Left cardiac atrium (tissue), 4 donors: ENCODE measurements at regions of chr11 and their contacts with region 1.

Region 1: DNA sequence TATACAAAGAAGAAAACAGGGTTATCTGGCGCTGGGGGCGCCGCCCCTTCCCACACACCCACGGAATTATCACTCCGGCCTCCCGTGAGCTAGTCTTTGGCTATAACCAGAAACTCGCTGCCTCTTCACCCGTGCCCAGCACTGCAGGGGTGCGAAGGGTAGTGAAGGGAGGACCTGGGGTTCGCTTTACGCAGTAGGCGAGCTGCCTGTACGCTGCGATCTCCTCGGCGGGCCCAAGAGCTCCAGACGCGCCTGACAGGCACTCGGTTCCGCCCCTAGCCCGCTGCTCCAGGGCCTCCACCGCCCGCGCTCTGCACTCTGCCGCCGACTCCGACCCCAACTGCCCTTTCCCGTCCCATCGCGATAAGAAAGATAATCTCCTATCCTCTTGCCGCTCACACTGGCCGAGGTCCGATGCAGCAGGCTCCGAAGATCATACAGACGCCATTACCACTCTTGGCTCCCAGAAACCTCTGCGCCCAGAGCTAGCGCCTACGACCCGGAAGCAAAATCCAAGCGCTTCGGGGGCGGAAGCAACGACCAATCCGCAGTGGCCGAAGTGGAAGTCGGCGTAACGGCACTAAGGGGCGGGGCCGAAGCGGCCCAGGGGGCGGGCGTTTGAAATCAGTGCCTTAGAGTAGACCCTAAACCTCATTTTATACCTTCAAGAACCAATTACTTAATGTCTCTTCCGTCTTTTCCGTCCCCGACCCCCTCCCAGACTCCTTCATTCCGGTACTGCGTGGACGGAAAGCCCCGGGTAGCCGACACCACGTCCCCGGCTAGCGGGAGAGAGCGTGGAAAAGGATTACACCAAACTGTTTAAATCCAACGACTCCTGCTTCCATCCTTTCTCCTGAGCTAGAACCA is at the starts of genes CWC15 and KDM4D:
- DNase-seq: peak; percentile 96
- ATAC-seq: peak; percentile 100
- total RNA-seq, gene CWC15: 60.8 to 65.5 TPM
- total RNA-seq, gene KDM4D: 0.80 to 0.89 TPM

Region 2: DNA sequence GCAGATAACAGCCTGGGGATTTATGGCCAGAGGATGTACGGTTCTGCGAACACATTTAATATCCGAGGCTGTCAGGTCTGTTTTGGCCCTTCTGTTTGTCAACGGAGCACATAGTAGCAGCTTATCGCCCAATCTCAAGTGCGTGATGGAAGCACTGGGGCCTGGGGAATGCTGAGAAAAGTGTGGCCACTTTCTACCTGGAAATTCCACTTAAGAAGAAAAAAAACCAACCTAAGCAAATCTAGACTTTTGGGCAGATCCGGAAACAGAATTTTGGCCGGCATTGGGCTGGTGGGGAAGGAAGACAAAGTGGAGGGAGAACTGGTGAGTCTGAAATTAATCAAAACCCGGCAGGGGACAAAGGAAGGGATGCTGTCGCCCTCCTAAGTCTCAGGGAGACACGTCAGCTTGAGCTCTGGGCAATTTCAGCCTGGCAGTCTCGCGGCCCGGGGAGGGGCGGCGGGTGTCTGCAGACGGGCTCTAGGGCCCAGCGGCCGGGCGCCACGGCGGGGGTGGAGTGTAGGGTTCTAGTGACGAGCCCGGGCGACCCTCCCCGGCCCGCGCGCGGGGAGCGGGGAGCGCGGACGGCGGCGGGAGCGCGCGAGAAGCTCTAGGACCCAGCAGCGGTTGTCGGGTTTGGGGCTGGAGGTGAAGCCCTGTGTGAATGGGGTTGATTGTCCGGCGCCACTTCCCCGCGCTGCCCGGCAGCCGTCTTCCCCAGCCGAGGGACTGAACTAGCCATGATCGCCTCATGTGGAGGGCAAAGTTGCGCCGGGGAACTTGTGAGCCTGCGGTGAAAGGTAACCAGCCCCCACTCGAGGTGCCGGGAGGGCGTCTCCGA is 205.4 kb before region 1 on chr11 and contains the start of gene AMOTL1:
- intact Hi-C with region 1: loop called in 1 of 2 experiments (anchors 10 kb)
- DNase-seq: peak; percentile 95
- ATAC-seq: peak; percentile 91 to 95
- total RNA-seq, gene AMOTL1: 60.6 to 106 TPM

Region 3: GRCh38 chr11:94897330-94897768 is 76.0 kb before region 1 on chr11:
- intact Hi-C with region 1: loop called in 1 of 2 experiments (anchors 10 kb)
- DNase-seq: peak; percentile 43
- ATAC-seq: peak in 1 of 2 donors; percentile 33

Region 4: GRCh38 chr11:95404330-95404729 is 431.0 kb after region 1 on chr11:
- intact Hi-C with region 1: no loop called
- DNase-seq: no peak
- ATAC-seq: no peak